ENCODE measurements at regions of chr12 and their contacts with region 1.

Region 1: DNA sequence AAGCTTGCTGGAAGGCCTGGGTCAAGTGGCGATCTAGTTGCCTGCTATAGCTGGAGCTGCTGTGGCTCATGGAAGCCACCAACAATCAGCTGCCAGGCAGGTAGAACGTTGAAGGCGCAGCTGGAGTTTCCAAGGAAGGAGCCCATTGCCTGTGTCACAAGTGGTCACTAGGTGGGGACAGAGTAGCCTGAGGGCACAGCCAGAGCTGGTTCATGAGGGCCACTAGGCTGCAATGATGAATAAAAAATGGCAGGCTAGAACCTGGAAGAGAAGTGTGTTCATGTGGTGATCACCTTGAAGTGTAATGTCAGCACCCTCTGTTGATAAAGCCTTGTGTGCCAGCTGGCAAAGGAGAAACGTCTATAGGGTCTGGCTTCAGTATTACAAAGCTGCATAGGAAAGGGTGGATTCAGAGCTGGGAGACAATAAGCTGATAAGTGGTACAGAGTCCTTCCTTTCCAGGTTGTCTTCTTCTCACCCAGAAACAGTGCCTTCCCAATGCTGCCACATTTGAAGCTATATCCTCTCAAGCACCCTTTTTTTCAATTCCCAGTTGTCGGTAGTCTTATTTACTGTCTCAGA is 165.8 kb downstream of the EMP1 start:
- DNase-seq: peak; percentile 48
- H3K4me3 ChIP-seq: no peak overlapping the region
- H3K27ac ChIP-seq: no peak overlapping the region
- H3K4me1 ChIP-seq: no peaks in the 10 kb centered on the region
- H3K27me3 ChIP-seq: peaks cover 3 to 13% of the 10 kb centered on the region in 2 experiments
- CTCF ChIP-seq: peak; percentile 86
- POLR2A ChIP-seq: no peak

Region 2: DNA sequence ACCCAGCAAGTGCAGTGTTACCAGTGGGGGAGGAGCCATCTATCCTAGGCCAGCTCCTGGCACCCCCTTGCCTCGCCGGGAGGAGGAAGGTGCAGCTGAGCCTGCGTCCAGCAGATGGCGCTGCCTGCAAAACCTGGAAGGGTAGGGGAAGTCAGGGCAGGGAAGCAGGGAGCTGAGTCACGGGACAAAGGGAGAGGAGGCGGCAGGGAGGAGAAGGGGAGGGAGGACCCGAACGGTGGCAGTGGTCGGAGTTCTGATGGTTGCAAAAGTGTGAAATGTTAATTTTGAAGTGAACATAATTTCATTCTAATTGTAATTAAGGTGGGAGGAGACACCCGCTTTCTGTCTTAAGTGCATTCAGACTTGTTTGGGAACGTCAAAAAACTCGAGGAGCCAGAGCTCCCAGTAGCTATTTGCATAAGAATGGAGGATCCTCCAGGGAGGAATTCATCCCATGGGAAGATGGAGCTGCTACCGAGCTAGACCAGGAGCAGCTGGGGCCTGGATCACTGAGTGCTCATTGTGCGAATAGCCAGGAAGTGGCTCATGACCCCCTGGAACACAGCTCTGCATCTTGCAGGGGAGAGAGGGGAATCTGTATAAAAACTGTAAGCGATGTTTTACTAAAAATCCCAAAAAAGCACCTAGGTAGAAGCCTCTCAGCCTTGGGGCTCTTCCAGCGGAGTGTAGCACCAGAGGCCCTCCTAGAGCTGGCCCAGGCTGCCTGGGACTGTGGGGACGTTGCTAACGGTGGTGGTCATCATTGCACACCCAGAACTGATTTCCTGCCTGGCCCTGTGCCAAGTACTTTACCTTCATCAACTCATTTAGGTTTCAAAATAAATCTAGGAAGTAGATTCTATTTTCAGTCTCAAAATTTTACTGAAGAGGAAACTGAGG is 106.3 kb before region 1 on chr12:
- CTCF ChIA-PET with region 1: interaction called, 30 read pairs
- POLR2A ChIA-PET with region 1: no interaction called
- dilution Hi-C with region 1: no loop called
- intact Hi-C with region 1: loop called (anchors 5 kb)
- DNase-seq: peak; percentile 96
- H3K4me3 ChIP-seq: peak overlapping the region in 2 of 3 experiments; percentile 27 to 34
- H3K27ac ChIP-seq: peak overlapping the region; percentile 2
- H3K4me1 ChIP-seq: peaks cover 17% of the 10 kb centered on the region
- H3K27me3 ChIP-seq: no peaks in the 10 kb centered on the region
- CTCF ChIP-seq: peak; percentile 98 to 100
- POLR2A ChIP-seq: no peak

Region 3: DNA sequence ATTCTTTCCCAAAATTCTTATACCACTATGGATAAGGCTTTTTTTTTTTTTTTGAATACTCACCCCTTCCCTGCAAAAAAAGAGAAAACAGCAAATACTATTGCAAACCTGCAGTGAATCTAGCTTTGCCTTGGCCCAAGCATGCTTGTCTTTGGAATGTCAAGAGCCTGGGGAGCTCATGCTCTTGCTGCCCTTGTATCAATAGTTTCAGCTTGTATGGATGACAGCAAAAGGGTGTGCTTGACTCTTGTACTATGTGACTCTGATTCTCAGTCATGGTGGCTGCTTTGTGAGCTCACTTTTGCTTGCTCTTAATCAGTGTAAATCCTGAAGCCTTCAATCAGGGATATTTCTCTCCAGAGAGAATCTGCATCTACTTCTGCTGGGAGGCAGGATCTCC is 16.6 kb before region 1 on chr12:
- CTCF ChIA-PET with region 1: interaction called, 30 read pairs
- POLR2A ChIA-PET with region 1: no interaction called
- dilution Hi-C with region 1: no loop called
- intact Hi-C with region 1: no loop called
- DNase-seq: no peak
- H3K4me3 ChIP-seq: no peak overlapping the region
- H3K27ac ChIP-seq: no peak overlapping the region
- H3K4me1 ChIP-seq: no peaks in the 10 kb centered on the region
- H3K27me3 ChIP-seq: peaks cover 2 to 3% of the 10 kb centered on the region in 2 experiments
- CTCF ChIP-seq: no peak
- POLR2A ChIP-seq: no peak

Region 4: GRCh38 chr12:13383379-13383778 is 21.0 kb after region 1 on chr12:
- CTCF ChIA-PET with region 1: interaction called, 16 read pairs
- POLR2A ChIA-PET with region 1: no interaction called
- dilution Hi-C with region 1: no loop called
- intact Hi-C with region 1: no loop called
- DNase-seq: no peak
- H3K4me3 ChIP-seq: no peak overlapping the region
- H3K27ac ChIP-seq: no peak overlapping the region
- H3K4me1 ChIP-seq: no peaks in the 10 kb centered on the region
- H3K27me3 ChIP-seq: no peaks in the 10 kb centered on the region
- CTCF ChIP-seq: no peak
- POLR2A ChIP-seq: no peak

Region 5: GRCh38 chr12:13661005-13661887 is 298.9 kb after region 1 on chr12:
- CTCF ChIA-PET with region 1: interaction called, 3 read pairs
- POLR2A ChIA-PET with region 1: no interaction called
- dilution Hi-C with region 1: no loop called
- intact Hi-C with region 1: loop called (anchors 2 kb)
- DNase-seq: peak; percentile 44
- H3K4me3 ChIP-seq: no peak overlapping the region
- H3K27ac ChIP-seq: no peak overlapping the region
- H3K4me1 ChIP-seq: no peaks in the 10 kb centered on the region
- H3K27me3 ChIP-seq: peaks cover 0 to 4% of the 10 kb centered on the region in 2 experiments
- CTCF ChIP-seq: peak; percentile 63 to 80
- POLR2A ChIP-seq: no peak